RWPE1 (cell line): ENCODE measurements at regions of chr15 and their contacts with region 1.

Region 1: GRCh38 chr15:90291679-90292356 is 26.3 kb downstream of the NGRN start:
- DNase-seq: peak; percentile 56
- H3K27ac ChIP-seq: no peak overlapping the region
- CTCF ChIP-seq: no peak

Region 2: DNA sequence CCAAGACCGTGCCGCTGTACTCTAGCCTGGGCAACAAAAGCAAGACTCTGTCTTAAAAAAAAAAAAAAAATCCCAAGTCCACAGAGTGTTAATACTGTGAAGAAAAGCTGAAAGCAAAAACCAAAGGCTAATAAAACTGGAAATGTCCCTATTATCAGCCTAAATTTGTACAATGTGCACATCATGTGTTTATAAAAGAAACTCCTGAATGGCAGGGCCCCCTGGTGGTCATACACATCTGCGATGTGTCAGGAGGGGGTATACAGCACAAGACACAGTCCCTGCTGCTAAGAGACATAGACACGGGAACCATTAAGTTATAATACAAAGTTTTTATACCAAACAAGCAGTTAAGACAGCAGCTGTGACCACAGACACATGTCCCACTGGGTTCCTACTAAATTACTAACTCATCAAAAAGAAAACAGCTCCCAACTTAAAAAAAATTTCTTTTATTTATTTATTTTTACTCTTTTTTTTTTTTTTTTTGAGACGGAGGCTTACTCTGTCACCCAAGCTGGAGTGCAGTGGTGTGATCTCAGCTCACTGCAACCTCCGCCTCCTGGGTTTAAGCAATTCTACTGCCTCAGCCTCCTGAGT is 220.5 kb before region 1 on chr15:
- CTCF ChIA-PET with region 1: interaction called, 11 read pairs
- POLR2A ChIA-PET with region 1: no interaction called
- DNase-seq: peak; percentile 78
- H3K27ac ChIP-seq: no peak overlapping the region; the same call in 1 of the 2 replicates
- CTCF ChIP-seq: peak; percentile 88

Region 3: DNA sequence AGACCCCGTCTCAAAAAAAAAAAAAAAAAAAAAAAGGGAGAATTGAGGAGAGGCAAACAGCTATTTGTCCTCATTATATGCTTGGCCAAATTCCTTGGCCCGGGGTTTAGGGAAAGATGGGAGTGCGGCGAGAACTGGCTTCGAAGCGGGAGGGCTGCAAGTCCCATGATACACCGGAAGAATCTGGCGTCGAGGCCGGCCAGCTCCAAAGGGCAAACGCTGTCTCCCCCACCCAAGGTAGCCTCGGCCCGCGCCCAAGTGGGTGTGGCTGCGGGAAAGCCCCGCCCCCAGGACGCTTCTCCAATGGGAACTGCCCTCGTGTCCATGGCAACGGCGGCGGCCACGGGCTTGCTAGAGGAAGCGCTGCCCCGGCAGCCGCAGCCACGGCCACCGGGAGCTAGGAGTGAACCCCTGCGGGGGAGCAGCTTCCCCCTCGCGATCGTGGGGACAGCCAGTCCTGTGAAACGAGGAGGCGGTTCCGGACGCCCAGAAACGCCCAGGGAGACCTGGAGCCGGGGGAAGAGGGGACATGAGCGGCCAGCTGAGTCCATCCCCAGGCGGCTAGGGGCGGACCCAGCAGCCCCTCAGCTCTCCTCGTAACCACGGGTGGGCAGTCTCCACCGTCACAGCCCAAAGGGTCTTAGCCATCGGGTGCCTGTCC is 42.5 kb before region 1 on chr15 and contains the start of gene TTLL13:
- CTCF ChIA-PET with region 1: interaction called, 10 read pairs
- POLR2A ChIA-PET with region 1: no interaction called
- DNase-seq: peak; percentile 81
- H3K27ac ChIP-seq: peak within 1 kb of the TSS; percentile 50
- CTCF ChIP-seq: no peak

Region 4: GRCh38 chr15:90362936-90363212 is 71.1 kb after region 1 on chr15:
- CTCF ChIA-PET with region 1: no interaction called
- POLR2A ChIA-PET with region 1: no interaction called
- DNase-seq: peak; percentile 57
- H3K27ac ChIP-seq: peak overlapping the region; percentile 94
- CTCF ChIP-seq: no peak